Esophagus muscularis mucosa (tissue), 4 donors: ENCODE measurements at regions of chr3 and their contacts with region 1.

Region 1: GRCh38 chr3:171187706-171188290 is 161.3 kb upstream of the SLC2A2 start:
- DNase-seq: no peak
- H3K4me3 ChIP-seq: no peak overlapping the region
- H3K27ac ChIP-seq: no peak overlapping the region
- H3K4me1 ChIP-seq: peaks cover 19 to 50% (median 41%) of the 10 kb centered on the region in 4 donors
- H3K27me3 ChIP-seq: no peaks in the 10 kb centered on the region
- CTCF ChIP-seq: peak; percentile 55 to 58 (median 55)
- EP300 ChIP-seq: no peak
- POLR2A ChIP-seq: no peak

Region 2: GRCh38 chr3:171328419-171329082 is 140.8 kb after region 1 on chr3:
- intact Hi-C with region 1: loop called (anchors 10 kb)
- DNase-seq: no peak
- H3K4me3 ChIP-seq: no peak overlapping the region
- H3K27ac ChIP-seq: peak overlapping the region in 3 of 4 donors; percentile 28 to 61 (median 59)
- H3K4me1 ChIP-seq: peaks cover 44 to 76% (median 65%) of the 10 kb centered on the region in 4 donors
- H3K27me3 ChIP-seq: no peaks in the 10 kb centered on the region
- CTCF ChIP-seq: no peak
- EP300 ChIP-seq: no peak
- POLR2A ChIP-seq: no peak